CD4-positive, alpha-beta T cell (primary cell): ENCODE measurements at regions of chr1 and their contacts with region 1.

Region 1: DNA sequence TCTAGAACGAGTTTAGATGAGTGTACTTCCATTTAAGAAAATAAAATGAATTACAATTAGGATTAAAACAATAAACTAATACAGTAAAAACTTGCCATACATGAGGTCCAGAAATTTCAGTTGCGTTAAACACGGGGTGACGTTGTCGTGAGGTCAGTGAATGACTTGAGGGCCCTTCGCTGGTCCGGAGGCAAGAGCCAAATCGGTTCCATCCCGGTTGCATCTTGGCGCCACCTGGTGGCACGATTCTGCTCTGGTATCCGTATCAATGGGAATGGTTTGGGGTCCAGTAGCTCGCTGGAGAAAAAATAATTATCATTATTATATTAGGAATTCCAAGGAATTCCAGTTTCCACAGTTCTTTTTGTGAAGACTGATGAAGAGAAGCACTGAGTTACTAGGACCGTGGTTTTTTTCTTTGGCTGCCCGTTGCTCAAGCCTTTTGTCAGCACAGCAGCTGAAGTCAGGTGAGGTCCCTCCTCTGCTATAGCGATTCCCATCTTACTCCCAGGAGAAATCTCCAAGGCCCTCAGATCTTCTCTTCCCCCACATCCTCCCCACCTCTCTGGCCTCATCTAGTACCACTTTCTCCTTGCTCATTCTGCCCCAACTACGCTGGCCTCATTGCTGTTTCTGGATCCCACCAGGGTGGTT is 161.4 kb downstream of the SLC35F3 start:
- DNase-seq: peak; percentile 36 to 74 (median 54)
- ATAC-seq: no peak
- H3K4me3 ChIP-seq: no peak overlapping the region
- H3K4me3 Mint-ChIP-seq: no peak overlapping the region
- H3K27ac ChIP-seq: no peak overlapping the region
- H3K27ac Mint-ChIP-seq: no peak overlapping the region
- H3K4me1 ChIP-seq: peaks cover 4% of the 10 kb centered on the region
- H3K4me1 Mint-ChIP-seq: no peaks in the 10 kb centered on the region
- H3K27me3 ChIP-seq: peaks cover 3 to 4% of the 10 kb centered on the region in 2 experiments
- H3K27me3 Mint-ChIP-seq: peaks cover 14% of the 10 kb centered on the region
- CTCF ChIP-seq: peak; percentile 86

Region 2: DNA sequence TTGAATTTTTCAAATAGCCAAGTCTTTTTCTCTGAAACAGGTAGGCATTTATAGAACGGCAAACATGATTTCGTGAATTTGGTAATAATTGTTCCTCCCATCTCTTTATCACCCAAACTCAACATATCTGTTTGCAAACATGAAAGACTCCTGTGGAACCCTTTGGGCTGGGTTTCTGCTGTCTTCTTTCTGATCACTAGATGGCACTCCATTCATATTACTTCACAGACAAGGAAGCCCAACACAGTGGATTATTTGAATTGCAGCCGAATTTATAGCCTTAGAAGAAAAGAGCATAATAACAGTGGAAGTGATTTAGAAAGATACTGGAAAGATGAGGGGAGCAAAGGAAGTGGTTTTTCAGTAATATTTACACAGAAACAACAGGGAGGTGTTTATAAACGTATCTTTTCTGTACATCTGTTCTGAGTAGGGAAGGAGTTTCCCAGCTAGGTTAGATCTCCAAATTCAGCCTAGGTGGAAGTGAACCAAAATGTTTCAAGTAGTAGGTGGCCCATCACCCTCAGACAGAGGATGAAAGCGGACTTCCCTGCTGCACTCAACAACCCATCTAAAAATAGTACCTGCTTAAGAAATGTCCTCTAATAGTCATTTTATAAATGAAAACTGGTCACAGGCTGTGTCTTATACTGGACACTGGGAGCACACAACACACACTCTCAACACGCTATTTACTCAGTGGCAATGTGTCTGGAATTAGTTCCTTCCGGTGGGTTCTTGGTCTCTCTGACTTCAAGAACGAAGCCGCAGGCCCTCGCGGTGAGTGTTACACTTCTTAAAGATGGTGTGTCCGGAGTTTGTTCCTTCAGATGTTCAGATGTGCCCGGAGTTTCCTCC is 670.8 kb before region 1 on chr1:
- CTCF ChIA-PET with region 1: no interaction called
- POLR2A ChIA-PET with region 1: no interaction called
- intact Hi-C with region 1: loop called (anchors 1 to 5 kb)
- DNase-seq: peak in 4 of 14 experiments; percentile 10 to 52 (median 44)
- ATAC-seq: peak; percentile 46
- H3K4me3 ChIP-seq: no peak overlapping the region
- H3K4me3 Mint-ChIP-seq: no peak overlapping the region
- H3K27ac ChIP-seq: no peak overlapping the region
- H3K27ac Mint-ChIP-seq: no peak overlapping the region
- H3K4me1 ChIP-seq: no peaks in the 10 kb centered on the region
- H3K4me1 Mint-ChIP-seq: no peaks in the 10 kb centered on the region
- H3K27me3 ChIP-seq: peaks cover 2 to 8% of the 10 kb centered on the region in 2 experiments
- H3K27me3 Mint-ChIP-seq: peaks cover 48% of the 10 kb centered on the region
- CTCF ChIP-seq: peak; percentile 68

Region 3: GRCh38 chr1:233873666-233874065 is 192.3 kb before region 1 on chr1:
- CTCF ChIA-PET with region 1: no interaction called
- POLR2A ChIA-PET with region 1: no interaction called
- intact Hi-C with region 1: no loop called
- DNase-seq: no peak
- ATAC-seq: no peak
- H3K4me3 ChIP-seq: no peak overlapping the region
- H3K4me3 Mint-ChIP-seq: no peak overlapping the region
- H3K27ac ChIP-seq: no peak overlapping the region
- H3K27ac Mint-ChIP-seq: no peak overlapping the region
- H3K4me1 ChIP-seq: no peaks in the 10 kb centered on the region
- H3K4me1 Mint-ChIP-seq: no peaks in the 10 kb centered on the region
- H3K27me3 ChIP-seq: no peaks in the 10 kb centered on the region
- H3K27me3 Mint-ChIP-seq: peaks cover 16% of the 10 kb centered on the region
- CTCF ChIP-seq: no peak